A549 (cell line): ENCODE measurements at regions of chr11 and their contacts with region 1.

Region 1: GRCh38 chr11:119067371-119068222 is at the start of gene VPS11:
- DNase-seq: peak; percentile 93 to 94
- ATAC-seq: peak; percentile 94 to 97
- H3K4me3 ChIP-seq: peak within 1 kb of the TSS; percentile 98
- H3K27ac ChIP-seq: peak within 1 kb of the TSS; percentile 87 to 95
- H3K4me1 ChIP-seq: peaks cover 5% of the 10 kb centered on the region
- CTCF ChIP-seq: no peak
- EP300 ChIP-seq: no peak
- POLR2A ChIP-seq: peak; percentile 55
- RAD21 ChIP-seq: no peak
- polyA plus RNA-seq, gene VPS11: 4.6 and 11.3 TPM in 2 replicates

Region 2: DNA sequence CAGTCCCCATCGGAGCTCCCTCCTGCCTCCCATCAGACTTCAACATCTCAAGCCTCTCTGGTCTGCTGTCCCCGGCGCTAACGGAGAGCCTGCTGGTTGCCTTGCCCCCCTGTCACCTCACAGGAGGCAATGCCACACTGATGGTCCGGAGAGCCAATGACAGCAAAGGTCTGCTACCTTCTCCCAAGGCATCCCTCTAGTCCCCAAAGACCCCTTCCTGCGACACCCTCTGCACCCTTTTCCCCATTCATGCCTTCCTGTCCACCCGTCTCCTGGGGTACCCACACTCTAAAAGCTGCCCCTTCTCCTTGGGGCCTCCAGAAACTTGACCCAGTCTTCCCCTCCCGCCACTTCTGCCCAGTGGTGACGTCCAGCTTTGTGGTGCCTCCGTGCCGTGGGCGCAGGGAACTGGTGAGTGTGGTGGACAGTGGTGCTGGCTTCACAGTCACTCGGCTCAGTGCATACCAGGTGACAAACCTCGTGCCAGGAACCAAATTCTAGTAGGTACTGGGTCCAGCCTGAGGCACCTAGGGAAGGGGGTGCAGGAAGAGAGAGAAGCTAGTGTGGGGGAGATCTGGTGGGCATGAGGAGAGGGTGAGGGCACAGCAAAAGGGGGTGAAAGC is 110.6 kb before region 1 on chr11:
- CTCF ChIA-PET with region 1: no interaction called
- POLR2A ChIA-PET with region 1: no interaction called
- DNase-seq: no peak
- ATAC-seq: peak in 1 of 2 experiments; percentile 26; a peak in 2 of 6 replicates
- H3K4me3 ChIP-seq: no peak overlapping the region
- H3K27ac ChIP-seq: no peak overlapping the region
- H3K4me1 ChIP-seq: peaks cover 4% of the 10 kb centered on the region; the same call in 1 of the 3 replicates
- CTCF ChIP-seq: no peak; the same call in 2 of the 3 replicates
- EP300 ChIP-seq: no peak
- POLR2A ChIP-seq: no peak
- RAD21 ChIP-seq: no peak

Region 3: GRCh38 chr11:119047205-119047604 is 20.4 kb before region 1 on chr11:
- CTCF ChIA-PET with region 1: no interaction called
- POLR2A ChIA-PET with region 1: no interaction called
- DNase-seq: no peak
- ATAC-seq: no peak
- H3K4me3 ChIP-seq: no peak overlapping the region
- H3K27ac ChIP-seq: no peak overlapping the region
- H3K4me1 ChIP-seq: no peaks in the 10 kb centered on the region
- CTCF ChIP-seq: no peak
- EP300 ChIP-seq: no peak
- POLR2A ChIP-seq: no peak
- RAD21 ChIP-seq: no peak

Region 4: GRCh38 chr11:119095066-119095880 is 27.7 kb after region 1 on chr11:
- CTCF ChIA-PET with region 1: interaction called, 6 read pairs
- POLR2A ChIA-PET with region 1: interaction called, 15 read pairs
- DNase-seq: peak; percentile 93 to 99
- ATAC-seq: peak; percentile 72 to 88
- H3K4me3 ChIP-seq: peak overlapping the region; percentile 68
- H3K27ac ChIP-seq: peak overlapping the region; percentile 89 to 100
- H3K4me1 ChIP-seq: peaks cover 35% of the 10 kb centered on the region
- CTCF ChIP-seq: no peak; the same call in 1 of the 3 replicates
- EP300 ChIP-seq: no peak
- POLR2A ChIP-seq: peak; percentile 99
- RAD21 ChIP-seq: no peak

Region 5: GRCh38 chr11:119114351-119114750 is 46.8 kb after region 1 on chr11:
- CTCF ChIA-PET with region 1: no interaction called
- POLR2A ChIA-PET with region 1: no interaction called
- DNase-seq: no peak
- ATAC-seq: no peak
- H3K4me3 ChIP-seq: no peak overlapping the region
- H3K27ac ChIP-seq: no peak overlapping the region
- H3K4me1 ChIP-seq: no peaks in the 10 kb centered on the region
- CTCF ChIP-seq: no peak
- EP300 ChIP-seq: no peak
- POLR2A ChIP-seq: no peak
- RAD21 ChIP-seq: no peak